WTC11 (cell line): ENCODE measurements at regions of chr11 and their contacts with region 1.

Region 1: DNA sequence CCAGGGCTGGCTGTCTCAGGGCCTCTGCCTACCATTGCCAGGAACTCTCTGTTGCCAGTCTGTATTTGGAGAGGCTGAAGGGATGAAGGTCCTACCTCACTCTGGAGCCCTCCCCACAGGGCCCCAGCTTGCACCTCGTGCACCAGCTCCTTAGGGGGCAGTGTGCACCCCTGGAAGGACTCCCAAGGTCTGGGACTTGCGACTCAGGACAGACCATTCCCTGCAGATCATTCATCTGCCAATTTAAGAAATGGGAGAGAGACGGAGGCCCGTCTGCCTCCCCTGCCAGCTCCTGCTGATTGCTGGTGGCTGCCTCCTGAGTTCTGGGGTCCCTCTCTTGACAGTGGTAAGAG is 27.5 kb upstream of the MALAT1 start:
- DNase-seq: peak; percentile 69
- ATAC-seq: peak; percentile 87
- H3K4me3 Mint-ChIP-seq: no peak overlapping the region
- H3K27ac Mint-ChIP-seq: no peak overlapping the region
- H3K4me1 Mint-ChIP-seq: peaks cover 2% of the 10 kb centered on the region
- H3K27me3 Mint-ChIP-seq: peaks cover 11% of the 10 kb centered on the region
- CTCF ChIP-seq: 0 out of 2 replicates have a peak, but pooled peaks have one; percentile 16

Region 2: GRCh38 chr11:65251476-65251875 is 219.9 kb before region 1 on chr11:
- CTCF ChIA-PET with region 1: no interaction called
- POLR2A ChIA-PET with region 1: no interaction called
- DNase-seq: no peak
- ATAC-seq: no peak
- H3K4me3 Mint-ChIP-seq: no peak overlapping the region
- H3K27ac Mint-ChIP-seq: no peak overlapping the region
- H3K4me1 Mint-ChIP-seq: no peaks in the 10 kb centered on the region
- H3K27me3 Mint-ChIP-seq: no peaks in the 10 kb centered on the region
- CTCF ChIP-seq: no peak

Region 3: GRCh38 chr11:65309094-65309405 is 162.3 kb before region 1 on chr11:
- CTCF ChIA-PET with region 1: no interaction called
- POLR2A ChIA-PET with region 1: no interaction called
- DNase-seq: no peak
- ATAC-seq: no peak
- H3K4me3 Mint-ChIP-seq: no peak overlapping the region
- H3K27ac Mint-ChIP-seq: no peak overlapping the region
- H3K4me1 Mint-ChIP-seq: peaks cover 11% of the 10 kb centered on the region
- H3K27me3 Mint-ChIP-seq: peaks cover 52% of the 10 kb centered on the region
- CTCF ChIP-seq: no peak

Region 4: GRCh38 chr11:65378221-65378907 is 93.0 kb before region 1 on chr11:
- CTCF ChIA-PET with region 1: interaction called, 10 read pairs
- POLR2A ChIA-PET with region 1: no interaction called
- DNase-seq: no peak
- ATAC-seq: no peak
- H3K4me3 Mint-ChIP-seq: no peak overlapping the region
- H3K27ac Mint-ChIP-seq: no peak overlapping the region
- H3K4me1 Mint-ChIP-seq: peaks cover 15% of the 10 kb centered on the region
- H3K27me3 Mint-ChIP-seq: no peaks in the 10 kb centered on the region; the same call in 1 of the 2 replicates
- CTCF ChIP-seq: no peak

Region 5: DNA sequence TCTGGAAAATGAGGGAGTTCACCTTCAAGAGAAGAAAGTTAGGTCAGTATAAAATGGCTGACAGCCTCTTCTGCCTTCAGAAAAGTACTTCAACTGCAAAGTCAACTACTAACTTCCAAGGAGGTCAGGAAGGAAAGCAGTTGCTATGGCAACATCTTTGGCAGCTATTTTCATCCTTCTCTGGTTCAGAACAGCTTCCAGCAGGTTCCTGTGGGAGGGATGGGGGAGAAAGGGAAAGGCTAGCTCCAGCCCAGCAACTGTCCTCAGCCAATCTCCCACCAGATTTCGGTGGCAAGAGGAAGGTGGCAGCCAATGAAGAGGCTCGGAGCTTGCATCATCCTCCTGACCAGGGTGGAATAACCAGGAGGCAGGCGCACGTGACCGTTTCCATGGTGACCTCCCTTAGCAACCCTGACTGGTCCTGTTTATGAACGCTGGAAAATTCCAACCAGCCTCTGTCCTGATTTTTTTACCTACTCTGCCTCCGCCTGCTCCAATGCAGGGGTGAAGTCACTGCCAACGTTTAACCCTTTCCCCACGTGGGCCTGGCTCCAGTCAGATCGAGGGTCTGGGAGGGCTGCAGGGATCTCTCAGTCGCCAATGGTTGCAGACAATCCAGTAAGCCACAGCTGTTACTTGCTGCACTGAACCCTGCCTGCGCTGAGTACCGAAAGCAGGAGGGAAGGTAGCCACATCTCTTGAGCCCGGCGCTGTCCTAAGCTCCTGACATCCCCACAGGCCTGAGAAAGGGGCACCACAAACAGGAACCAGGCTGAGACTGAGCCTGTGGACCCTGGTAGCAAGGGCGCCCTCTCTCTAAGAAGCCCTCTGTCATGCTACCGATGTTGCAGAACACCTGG is 16.3 kb after region 1 on chr11:
- CTCF ChIA-PET with region 1: interaction called, 129 read pairs
- POLR2A ChIA-PET with region 1: interaction called, 105 read pairs
- DNase-seq: peak; percentile 96
- ATAC-seq: peak; percentile 86
- H3K4me3 Mint-ChIP-seq: peak overlapping the region; percentile 62
- H3K27ac Mint-ChIP-seq: peak overlapping the region; percentile 100
- H3K4me1 Mint-ChIP-seq: peaks cover 82% of the 10 kb centered on the region
- H3K27me3 Mint-ChIP-seq: peaks cover 4% of the 10 kb centered on the region
- CTCF ChIP-seq: no peak

Region 6: DNA sequence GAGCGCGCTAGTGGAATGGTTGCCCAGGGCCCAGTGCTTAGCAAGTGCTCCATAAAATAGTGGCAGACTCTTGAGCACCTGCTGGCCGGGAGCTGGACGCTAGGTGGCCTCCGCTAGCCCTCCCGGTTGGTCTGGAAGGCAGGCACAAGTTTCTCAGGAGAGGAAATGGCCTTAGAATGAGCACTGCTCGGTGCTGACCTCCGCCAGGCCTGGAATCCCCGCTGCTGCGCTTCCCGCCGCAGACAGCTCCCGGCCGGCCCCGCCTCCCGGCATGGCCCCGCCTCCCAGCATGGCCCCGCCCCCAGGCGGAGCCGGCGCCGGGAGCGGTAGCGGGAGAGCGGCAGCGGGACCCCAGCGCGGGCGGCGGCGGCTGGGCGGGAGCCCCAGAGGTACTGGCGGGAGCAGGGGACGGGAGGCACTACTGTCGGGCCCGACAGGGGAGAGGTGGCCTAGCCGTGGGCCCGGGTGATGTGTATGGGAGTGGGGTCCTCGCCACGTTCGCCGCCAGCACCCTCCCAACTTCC is 166.5 kb after region 1 on chr11 and contains the start of gene SIPA1:
- CTCF ChIA-PET with region 1: no interaction called
- POLR2A ChIA-PET with region 1: no interaction called
- DNase-seq: peak; percentile 89
- ATAC-seq: peak; percentile 70
- H3K4me3 Mint-ChIP-seq: peak within 1 kb of the TSS; percentile 81
- H3K27ac Mint-ChIP-seq: peak within 1 kb of the TSS; percentile 94
- H3K4me1 Mint-ChIP-seq: peaks cover 22% of the 10 kb centered on the region
- H3K27me3 Mint-ChIP-seq: no peaks in the 10 kb centered on the region
- CTCF ChIP-seq: no peak
- total RNA-seq, gene SIPA1: 63.3 to 71.7 TPM (median 65.4 TPM) in 3 replicates